K562 (cell line): ENCODE measurements at regions of chr1 and their contacts with region 1.

Region 1: DNA sequence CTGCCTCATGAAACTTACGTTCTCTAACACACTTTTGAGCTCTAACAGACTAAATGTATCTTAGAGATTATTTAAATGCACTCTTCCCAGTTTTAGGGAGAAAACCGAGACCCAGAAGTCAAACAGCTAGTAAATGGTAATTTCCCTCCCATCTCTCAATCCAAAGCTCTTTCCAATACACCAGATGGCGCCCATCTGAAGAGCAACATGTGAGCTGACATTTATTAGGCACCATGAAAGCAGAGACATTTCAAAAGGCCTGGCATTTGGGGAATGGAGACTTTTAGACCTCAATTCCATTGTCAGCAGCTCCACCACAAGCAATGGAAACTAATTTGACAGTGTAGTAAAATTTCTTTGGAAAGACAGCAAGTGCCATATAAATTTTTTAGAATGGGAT is 191.4 kb downstream of the DAB1 start:
- DNase-seq: peak in 1 of 4 experiments; percentile 24
- ATAC-seq: no peak
- H3K4me3 ChIP-seq: no peak overlapping the region
- H3K27ac ChIP-seq: no peak overlapping the region
- H3K4me1 ChIP-seq: peaks cover 2 to 26% of the 10 kb centered on the region in 2 experiments
- H3K27me3 ChIP-seq: no peaks in the 10 kb centered on the region
- CTCF ChIP-seq: peak in 1 of 3 experiments; percentile 10; a peak in 1 of 6 replicates
- EP300 ChIP-seq: no peak
- POLR2A ChIP-seq: no peak
- RAD21 ChIP-seq: peak in 1 of 2 experiments; percentile 29; a peak in 2 of 4 replicates

Region 2: DNA sequence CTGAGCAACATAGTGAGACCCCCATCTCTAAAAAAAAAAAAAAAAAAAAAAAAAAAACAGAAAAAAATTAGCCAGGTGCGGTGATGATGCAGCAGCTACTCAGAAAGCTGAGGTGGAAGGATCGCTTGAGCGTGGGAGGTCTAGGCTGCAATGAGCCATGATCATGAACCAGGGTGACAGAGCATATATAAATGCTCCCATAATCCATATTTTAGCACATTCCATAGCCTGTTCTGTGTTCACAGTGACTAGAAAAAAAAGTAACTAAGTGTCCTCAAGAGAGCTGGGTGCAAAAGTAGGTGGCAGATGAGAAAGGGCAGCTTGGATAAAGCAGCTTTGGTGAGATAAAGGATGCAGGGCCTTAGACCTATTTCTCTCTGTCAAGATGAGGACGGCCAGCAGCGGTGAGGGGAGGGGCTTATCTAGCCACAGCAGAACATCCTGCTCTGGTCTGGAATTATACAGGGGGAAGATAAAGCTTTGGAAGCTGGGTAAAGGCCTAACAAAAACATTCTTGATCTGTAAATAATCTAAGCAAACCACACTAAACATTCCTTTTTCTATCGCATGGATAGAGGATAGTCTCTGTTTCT is 13.9 kb before region 1 on chr1:
- CTCF ChIA-PET with region 1: no interaction called
- POLR2A ChIA-PET with region 1: interaction called, 6 read pairs
- in situ Hi-C with region 1: no loop called
- intact Hi-C with region 1: loop called (anchors 1 kb)
- DNase-seq: peak; percentile 87 to 95 (median 91)
- ATAC-seq: peak; percentile 98
- H3K4me3 ChIP-seq: no peak overlapping the region
- H3K27ac ChIP-seq: peak overlapping the region; percentile 57; the same call in 2 of the 3 replicates
- H3K4me1 ChIP-seq: peaks cover 7 to 27% of the 10 kb centered on the region in 2 experiments; a peak in 3 of 5 replicates
- H3K27me3 ChIP-seq: no peaks in the 10 kb centered on the region; a peak in 1 of 5 replicates
- CTCF ChIP-seq: no peak
- EP300 ChIP-seq: peak; percentile 95
- POLR2A ChIP-seq: no peak
- RAD21 ChIP-seq: no peak